ENCODE measurements at regions of chr21 and their contacts with region 1.

Region 1: DNA sequence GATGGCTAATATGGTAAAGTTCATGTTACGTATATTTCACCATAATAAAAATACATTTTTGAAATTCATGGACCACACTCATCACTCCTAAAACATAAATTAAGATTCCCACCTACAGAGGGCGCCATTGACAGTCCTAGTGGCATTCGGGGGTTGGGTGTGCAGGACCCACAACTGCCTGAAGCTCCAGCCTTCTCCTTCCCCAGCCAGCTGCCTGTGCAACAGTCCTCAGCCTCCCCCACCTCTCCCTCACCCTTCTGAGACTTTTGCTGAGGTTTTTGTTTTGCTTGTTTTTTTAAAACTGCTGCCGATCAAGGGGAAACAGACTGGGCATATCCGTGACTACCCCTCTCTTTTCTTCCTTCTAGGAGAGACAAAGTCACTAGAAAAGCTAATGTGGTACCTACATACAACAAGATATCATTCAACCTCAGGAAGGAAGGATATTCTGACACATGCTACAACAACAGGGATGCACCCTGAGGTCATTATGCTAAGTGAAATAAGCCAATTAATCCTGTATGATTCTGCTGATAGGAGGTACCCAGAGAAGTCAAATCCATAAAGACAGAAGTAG is 9.2 kb upstream of the EVA1C start:
- DNase-seq: peak; percentile 3
- ATAC-seq: peak; percentile 81
- H3K4me3 ChIP-seq: no peak overlapping the region
- H3K27ac ChIP-seq: no peak overlapping the region
- H3K4me1 ChIP-seq: no peaks in the 10 kb centered on the region
- H3K27me3 ChIP-seq: no peaks in the 10 kb centered on the region; a peak in 1 of 4 replicates
- CTCF ChIP-seq: peak; percentile 52 to 56 (median 54)
- EP300 ChIP-seq: no peak
- POLR2A ChIP-seq: no peak
- RAD21 ChIP-seq: peak; percentile 48; the same call in 1 of the 2 replicates

Region 2: DNA sequence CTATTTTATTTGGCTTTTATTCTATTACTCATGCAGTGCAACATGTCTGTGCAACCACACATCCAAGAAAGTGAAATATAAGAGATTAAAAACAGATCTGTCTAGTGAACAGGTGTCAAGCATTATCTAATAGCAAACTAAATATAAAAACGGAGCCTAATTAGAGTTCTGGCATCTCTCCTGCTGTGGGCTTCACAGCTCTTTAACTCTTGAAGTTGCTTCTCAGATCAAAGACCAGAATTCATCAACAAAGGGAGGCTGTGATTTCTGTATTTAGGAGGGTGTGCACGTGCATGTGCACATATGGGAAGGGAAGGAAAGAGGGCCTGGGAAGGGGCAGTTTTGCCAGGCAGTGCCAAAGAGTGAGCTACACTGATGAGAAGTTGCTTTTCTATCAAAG is 205.4 kb before region 1 on chr21:
- CTCF ChIA-PET with region 1: no interaction called
- POLR2A ChIA-PET with region 1: no interaction called
- RAD21 ChIA-PET with region 1: no interaction called
- SMC1A ChIA-PET with region 1: no interaction called
- in situ Hi-C with region 1: no loop called
- intact Hi-C with region 1: no loop called
- DNase-seq: no peak
- ATAC-seq: no peak
- H3K4me3 ChIP-seq: no peak overlapping the region
- H3K27ac ChIP-seq: no peak overlapping the region
- H3K4me1 ChIP-seq: no peaks in the 10 kb centered on the region
- H3K27me3 ChIP-seq: no peaks in the 10 kb centered on the region
- CTCF ChIP-seq: no peak
- EP300 ChIP-seq: no peak
- POLR2A ChIP-seq: no peak
- RAD21 ChIP-seq: no peak

Region 3: DNA sequence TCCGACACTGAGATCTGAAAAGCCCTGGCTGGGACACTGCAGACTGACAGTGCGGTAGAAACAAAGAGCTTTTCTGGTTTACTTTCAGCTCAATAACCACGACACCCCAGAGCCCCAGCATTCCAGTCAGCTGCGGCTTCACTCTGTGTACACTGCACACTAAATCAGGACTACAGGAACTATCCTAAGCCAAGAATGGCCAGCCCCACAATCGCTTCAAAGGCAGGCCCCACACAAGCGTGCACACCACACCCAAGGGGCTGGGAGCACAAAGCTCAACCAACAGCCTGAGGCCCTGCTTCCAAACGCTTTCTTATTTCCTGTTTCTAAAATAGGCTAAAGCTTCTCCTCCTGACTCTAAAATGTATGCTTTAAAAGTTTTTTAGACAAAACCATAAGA is 38.9 kb before region 1 on chr21:
- CTCF ChIA-PET with region 1: no interaction called
- POLR2A ChIA-PET with region 1: no interaction called
- RAD21 ChIA-PET with region 1: no interaction called
- SMC1A ChIA-PET with region 1: no interaction called
- in situ Hi-C with region 1: no loop called
- intact Hi-C with region 1: no loop called
- DNase-seq: no peak
- ATAC-seq: no peak
- H3K4me3 ChIP-seq: no peak overlapping the region
- H3K27ac ChIP-seq: no peak overlapping the region
- H3K4me1 ChIP-seq: no peaks in the 10 kb centered on the region
- H3K27me3 ChIP-seq: no peaks in the 10 kb centered on the region
- CTCF ChIP-seq: no peak
- EP300 ChIP-seq: no peak
- POLR2A ChIP-seq: no peak
- RAD21 ChIP-seq: no peak

Region 4: GRCh38 chr21:32569261-32570230 is 166.3 kb after region 1 on chr21:
- CTCF ChIA-PET with region 1: interaction called, 34 read pairs
- POLR2A ChIA-PET with region 1: no interaction called
- RAD21 ChIA-PET with region 1: no interaction called
- SMC1A ChIA-PET with region 1: interaction called, 4 read pairs
- in situ Hi-C with region 1: no loop called
- intact Hi-C with region 1: loop called (anchors 10 kb)
- DNase-seq: peak; percentile 13
- ATAC-seq: peak; percentile 99
- H3K4me3 ChIP-seq: peak overlapping the region; percentile 73
- H3K27ac ChIP-seq: no peak overlapping the region
- H3K4me1 ChIP-seq: no peaks in the 10 kb centered on the region; the same call in 1 of the 2 replicates
- H3K27me3 ChIP-seq: peaks cover 2 to 3% of the 10 kb centered on the region in 2 experiments; a peak in 1 of 4 replicates
- CTCF ChIP-seq: peak; percentile 81 to 91 (median 86)
- EP300 ChIP-seq: no peak
- POLR2A ChIP-seq: peak; percentile 36; the same call in 1 of the 2 replicates
- RAD21 ChIP-seq: peak; percentile 53

Region 5: DNA sequence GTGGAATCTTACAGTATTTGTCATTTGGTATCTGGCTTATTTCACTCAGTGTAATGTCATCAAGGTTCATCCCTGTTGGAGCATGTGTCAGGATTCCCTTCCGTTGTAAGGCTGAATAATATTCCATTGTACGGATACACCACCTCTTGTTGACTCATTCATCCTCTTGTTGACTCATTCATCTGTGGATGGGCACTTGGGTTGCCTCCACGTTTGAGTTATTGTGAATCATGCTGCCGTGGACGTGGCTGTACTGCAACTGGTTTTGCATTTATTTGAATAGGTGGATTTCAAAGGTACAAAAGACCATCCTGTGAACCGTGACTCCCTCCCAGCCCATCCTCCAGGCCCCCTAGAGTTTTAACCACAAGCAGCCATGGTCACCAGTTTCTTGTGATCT is 193.9 kb after region 1 on chr21:
- CTCF ChIA-PET with region 1: interaction called, 90 read pairs
- POLR2A ChIA-PET with region 1: interaction called, 3 read pairs
- RAD21 ChIA-PET with region 1: interaction called, 17 read pairs
- SMC1A ChIA-PET with region 1: interaction called, 13 read pairs
- in situ Hi-C with region 1: loop called (anchors 10 kb)
- intact Hi-C with region 1: loop called (anchors 1 kb)
- DNase-seq: no peak
- ATAC-seq: no peak
- H3K4me3 ChIP-seq: no peak overlapping the region
- H3K27ac ChIP-seq: no peak overlapping the region
- H3K4me1 ChIP-seq: no peaks in the 10 kb centered on the region
- H3K27me3 ChIP-seq: no peaks in the 10 kb centered on the region
- CTCF ChIP-seq: no peak
- EP300 ChIP-seq: no peak
- POLR2A ChIP-seq: no peak
- RAD21 ChIP-seq: no peak

Region 6: DNA sequence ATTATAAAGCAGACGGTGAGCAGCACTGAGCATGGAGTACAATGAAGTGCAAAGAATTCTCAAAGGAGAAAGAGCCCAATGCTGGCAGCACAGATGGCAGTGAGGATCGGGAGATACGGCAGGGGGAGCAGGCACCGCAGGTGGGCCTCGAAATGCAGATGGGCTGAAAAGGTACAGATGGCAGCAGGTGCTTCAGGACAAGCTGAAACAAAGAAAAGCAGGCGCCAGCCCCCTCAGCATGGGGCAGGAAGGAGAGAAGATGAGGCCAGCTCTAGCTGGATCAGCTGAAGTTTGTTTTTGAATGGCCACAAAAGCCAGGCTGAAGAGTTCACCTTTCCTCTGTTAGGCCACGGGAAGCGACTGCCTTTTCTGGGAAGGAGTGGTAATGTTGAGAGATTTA is 201.2 kb after region 1 on chr21:
- CTCF ChIA-PET with region 1: interaction called, 90 read pairs
- POLR2A ChIA-PET with region 1: no interaction called
- RAD21 ChIA-PET with region 1: interaction called, 17 read pairs
- SMC1A ChIA-PET with region 1: interaction called, 13 read pairs
- in situ Hi-C with region 1: loop called (anchors 10 kb)
- intact Hi-C with region 1: loop called (anchors 1 kb)
- DNase-seq: no peak
- ATAC-seq: no peak
- H3K4me3 ChIP-seq: no peak overlapping the region
- H3K27ac ChIP-seq: no peak overlapping the region
- H3K4me1 ChIP-seq: no peaks in the 10 kb centered on the region
- H3K27me3 ChIP-seq: no peaks in the 10 kb centered on the region
- CTCF ChIP-seq: no peak
- EP300 ChIP-seq: no peak
- POLR2A ChIP-seq: no peak
- RAD21 ChIP-seq: no peak